PC-9 (cell line): ENCODE measurements at regions of chr20 and their contacts with region 1.

Region 1: GRCh38 chr20:1802385-1803060 is 92.7 kb upstream of the SIRPA start:
- DNase-seq: peak in 1 of 2 experiments; percentile 56
- H3K4me3 ChIP-seq: peak overlapping the region; percentile 54
- H3K27ac ChIP-seq: no peak overlapping the region
- H3K4me1 ChIP-seq: peaks cover 20% of the 10 kb centered on the region
- H3K27me3 ChIP-seq: no peaks in the 10 kb centered on the region
- CTCF ChIP-seq: peak; percentile 69

Region 2: DNA sequence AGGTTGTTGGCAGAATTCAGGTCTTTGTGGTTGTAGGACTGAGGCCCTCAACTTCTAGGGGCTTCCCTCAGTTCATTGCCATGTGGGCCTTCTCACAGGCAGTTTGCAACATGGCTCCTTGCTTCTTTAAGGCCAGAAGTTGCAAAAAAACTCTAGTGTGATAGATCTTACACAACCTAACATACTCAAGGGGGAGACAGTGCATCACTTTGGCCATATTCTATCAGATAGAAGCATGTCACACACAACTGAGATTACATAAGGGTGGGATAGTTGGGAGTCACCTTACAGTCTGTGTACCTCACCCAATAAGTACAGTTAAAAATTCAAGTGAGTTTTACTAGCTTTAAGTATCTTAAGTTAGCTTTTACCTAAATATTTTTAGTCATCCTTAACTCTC is 246.6 kb before region 1 on chr20:
- CTCF ChIA-PET with region 1: no interaction called
- POLR2A ChIA-PET with region 1: no interaction called
- intact Hi-C with region 1: no loop called
- DNase-seq: no peak
- H3K4me3 ChIP-seq: no peak overlapping the region
- H3K27ac ChIP-seq: no peak overlapping the region
- H3K4me1 ChIP-seq: no peaks in the 10 kb centered on the region
- H3K27me3 ChIP-seq: no peaks in the 10 kb centered on the region
- CTCF ChIP-seq: no peak

Region 3: GRCh38 chr20:1702328-1702727 is 100.2 kb before region 1 on chr20:
- CTCF ChIA-PET with region 1: no interaction called
- POLR2A ChIA-PET with region 1: no interaction called
- intact Hi-C with region 1: no loop called
- DNase-seq: no peak
- H3K4me3 ChIP-seq: no peak overlapping the region
- H3K27ac ChIP-seq: no peak overlapping the region
- H3K4me1 ChIP-seq: peaks cover 6% of the 10 kb centered on the region; the same call in 1 of the 2 replicates
- H3K27me3 ChIP-seq: no peaks in the 10 kb centered on the region
- CTCF ChIP-seq: no peak

Region 4: GRCh38 chr20:1844325-1845162 is 42.0 kb after region 1 on chr20:
- CTCF ChIA-PET with region 1: no interaction called
- POLR2A ChIA-PET with region 1: no interaction called
- intact Hi-C with region 1: no loop called
- DNase-seq: no peak
- H3K4me3 ChIP-seq: no peak overlapping the region
- H3K27ac ChIP-seq: no peak overlapping the region
- H3K4me1 ChIP-seq: no peaks in the 10 kb centered on the region
- H3K27me3 ChIP-seq: peaks cover 12% of the 10 kb centered on the region; the same call in 1 of the 2 replicates
- CTCF ChIP-seq: no peak

Region 5: GRCh38 chr20:1894951-1895673 is 92.6 kb after region 1 on chr20 and contains the start of gene SIRPA:
- CTCF ChIA-PET with region 1: no interaction called
- POLR2A ChIA-PET with region 1: no interaction called
- intact Hi-C with region 1: loop called (anchors 5 kb)
- DNase-seq: peak in 1 of 2 experiments; percentile 51
- H3K4me3 ChIP-seq: peak within 1 kb of the TSS; percentile 94
- H3K27ac ChIP-seq: no peak within 1 kb of the TSS
- H3K4me1 ChIP-seq: peaks cover 7% of the 10 kb centered on the region
- H3K27me3 ChIP-seq: no peaks in the 10 kb centered on the region
- CTCF ChIP-seq: no peak
- total RNA-seq, gene SIRPA: 18.4 and 18.5 TPM in 2 replicates

Region 6: GRCh38 chr20:1946762-1947534 is 144.4 kb after region 1 on chr20:
- CTCF ChIA-PET with region 1: no interaction called
- POLR2A ChIA-PET with region 1: no interaction called
- intact Hi-C with region 1: loop called (anchors 5 kb)
- DNase-seq: peak in 1 of 2 experiments; percentile 22
- H3K4me3 ChIP-seq: no peak overlapping the region
- H3K27ac ChIP-seq: no peak overlapping the region
- H3K4me1 ChIP-seq: 0 out of 2 replicates have a peak, but pooled peaks cover 4% of the 10 kb centered on the region
- H3K27me3 ChIP-seq: peaks cover 18% of the 10 kb centered on the region; the same call in 1 of the 2 replicates
- CTCF ChIP-seq: no peak

Region 7: DNA sequence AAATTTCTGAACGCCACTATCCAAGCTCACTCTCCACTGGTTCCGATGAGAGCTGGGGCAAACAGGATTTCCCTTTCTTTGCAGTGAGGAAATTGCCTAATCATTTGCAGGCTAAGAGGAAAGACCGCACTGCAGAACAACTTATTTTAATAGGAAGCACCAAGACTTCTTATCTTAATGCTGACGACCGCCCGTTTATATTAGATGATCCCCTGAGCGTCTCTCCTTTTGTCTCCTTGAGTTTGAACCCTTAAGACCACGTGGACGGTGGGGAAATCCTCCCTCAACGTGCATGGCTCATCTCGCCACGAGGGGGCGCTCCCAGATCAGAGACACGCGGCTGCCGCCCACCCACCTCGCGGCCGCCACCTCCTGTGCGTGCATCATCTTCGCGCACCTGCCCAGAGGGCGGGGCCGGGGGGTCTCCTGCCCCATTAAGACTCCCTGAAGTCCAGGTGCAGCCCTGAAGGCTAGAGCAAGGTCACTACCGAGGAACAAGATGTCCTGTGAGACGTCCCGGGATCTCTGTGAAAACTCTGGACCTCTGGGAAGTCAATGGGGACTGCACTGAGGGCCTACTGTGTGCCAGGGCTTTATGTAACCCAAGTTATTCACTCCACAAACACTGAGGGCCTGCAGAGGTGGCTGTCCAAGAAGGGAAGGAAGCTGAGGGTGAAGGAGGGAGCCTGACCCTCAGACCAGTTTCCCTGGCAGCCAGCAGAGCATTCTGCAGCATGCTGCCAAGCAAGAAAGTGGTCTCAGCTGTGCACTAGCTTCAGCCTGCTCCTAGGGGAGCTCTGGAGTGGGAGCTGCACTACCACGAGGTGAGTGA is 163.2 kb after region 1 on chr20:
- CTCF ChIA-PET with region 1: no interaction called
- POLR2A ChIA-PET with region 1: no interaction called
- intact Hi-C with region 1: loop called (anchors 5 kb)
- DNase-seq: peak in 1 of 2 experiments; percentile 55
- H3K4me3 ChIP-seq: no peak overlapping the region
- H3K27ac ChIP-seq: no peak overlapping the region
- H3K4me1 ChIP-seq: no peaks in the 10 kb centered on the region
- H3K27me3 ChIP-seq: peaks cover 75% of the 10 kb centered on the region
- CTCF ChIP-seq: peak; percentile 96

Region 8: GRCh38 chr20:2101865-2102584 is 299.5 kb after region 1 on chr20:
- CTCF ChIA-PET with region 1: no interaction called
- POLR2A ChIA-PET with region 1: no interaction called
- intact Hi-C with region 1: loop called (anchors 10 kb)
- DNase-seq: peak; percentile 79 to 89
- H3K4me3 ChIP-seq: peak overlapping the region; percentile 82
- H3K27ac ChIP-seq: peak overlapping the region; percentile 97
- H3K4me1 ChIP-seq: peaks cover 30% of the 10 kb centered on the region
- H3K27me3 ChIP-seq: no peaks in the 10 kb centered on the region
- CTCF ChIP-seq: no peak

Region 9: DNA sequence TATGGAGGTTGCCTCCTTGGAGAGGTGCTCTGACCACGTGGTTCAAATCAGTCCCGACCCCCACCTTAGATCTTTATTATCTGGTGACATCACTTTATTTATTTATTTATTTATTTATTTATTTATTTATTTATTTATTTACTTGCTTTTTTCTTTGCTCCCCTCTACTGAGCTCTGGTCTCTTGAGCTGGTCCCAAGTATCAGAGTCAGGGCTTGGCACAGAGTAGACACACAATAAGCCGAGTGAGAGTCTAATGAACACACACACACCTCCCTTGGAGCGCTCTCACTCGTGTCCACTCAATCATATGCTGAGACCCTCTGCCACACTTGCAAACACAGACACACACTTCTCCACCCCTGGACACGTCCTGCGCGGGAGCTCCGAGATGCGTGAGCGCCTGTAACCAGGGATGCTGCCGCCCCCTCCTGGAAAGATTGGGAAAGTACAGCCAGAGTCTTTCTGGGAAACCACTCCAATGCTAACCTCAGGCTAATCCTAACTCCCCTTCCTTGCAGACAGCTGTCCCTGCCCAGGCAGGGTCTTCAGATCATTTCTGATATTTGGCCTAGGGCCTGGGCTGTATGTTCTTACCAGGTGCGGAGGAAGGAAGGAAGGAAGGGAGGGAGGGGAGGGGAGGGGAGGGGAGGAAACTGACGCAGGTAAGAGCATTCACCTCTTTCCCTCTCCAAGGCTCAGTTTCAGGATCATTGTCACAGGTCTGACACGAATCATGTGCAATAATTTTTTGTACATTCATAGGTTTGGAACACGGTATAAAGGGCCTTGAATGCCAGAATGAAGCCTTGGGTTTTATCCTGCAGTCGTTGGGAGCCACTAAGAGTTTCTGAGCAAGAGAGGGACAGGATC is 370.0 kb after region 1 on chr20:
- CTCF ChIA-PET with region 1: no interaction called
- POLR2A ChIA-PET with region 1: no interaction called
- intact Hi-C with region 1: loop called (anchors 2 kb)
- DNase-seq: peak in 1 of 2 experiments; percentile 63
- H3K4me3 ChIP-seq: no peak overlapping the region
- H3K27ac ChIP-seq: no peak overlapping the region
- H3K4me1 ChIP-seq: no peaks in the 10 kb centered on the region
- H3K27me3 ChIP-seq: peaks cover 11% of the 10 kb centered on the region; the same call in 1 of the 2 replicates
- CTCF ChIP-seq: peak; percentile 97

Region 10: DNA sequence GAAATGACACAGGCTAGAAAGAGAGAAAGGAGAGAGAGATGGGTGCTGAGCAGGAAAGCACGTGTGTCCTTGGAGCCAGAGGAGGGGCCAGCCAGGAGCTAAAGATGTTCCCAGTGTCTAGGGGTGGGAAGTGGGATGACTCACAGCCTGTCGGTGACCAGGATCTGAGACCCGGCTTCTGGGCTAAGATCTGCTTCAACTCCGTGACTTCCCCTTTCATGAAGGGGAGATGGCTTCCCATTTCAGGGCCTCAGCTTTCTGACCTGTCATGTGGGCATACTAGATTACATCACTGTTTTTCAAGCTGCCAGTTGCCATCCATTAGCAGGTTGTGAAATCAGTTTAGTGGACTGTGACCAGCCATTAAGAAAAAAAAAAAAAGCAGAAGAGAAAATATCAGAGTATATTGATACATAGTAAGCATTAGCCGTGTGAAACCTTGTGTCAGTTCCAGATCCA is 498.7 kb after region 1 on chr20:
- CTCF ChIA-PET with region 1: no interaction called
- POLR2A ChIA-PET with region 1: interaction called, 11 read pairs
- intact Hi-C with region 1: no loop called
- DNase-seq: no peak
- H3K4me3 ChIP-seq: no peak overlapping the region
- H3K27ac ChIP-seq: no peak overlapping the region
- H3K4me1 ChIP-seq: no peaks in the 10 kb centered on the region
- H3K27me3 ChIP-seq: 0 out of 2 replicates have a peak, but pooled peaks cover 5% of the 10 kb centered on the region
- CTCF ChIP-seq: no peak